Endothelial cell of umbilical vein (primary cell): ENCODE measurements at regions of chrX and their contacts with region 1.

Region 1: DNA sequence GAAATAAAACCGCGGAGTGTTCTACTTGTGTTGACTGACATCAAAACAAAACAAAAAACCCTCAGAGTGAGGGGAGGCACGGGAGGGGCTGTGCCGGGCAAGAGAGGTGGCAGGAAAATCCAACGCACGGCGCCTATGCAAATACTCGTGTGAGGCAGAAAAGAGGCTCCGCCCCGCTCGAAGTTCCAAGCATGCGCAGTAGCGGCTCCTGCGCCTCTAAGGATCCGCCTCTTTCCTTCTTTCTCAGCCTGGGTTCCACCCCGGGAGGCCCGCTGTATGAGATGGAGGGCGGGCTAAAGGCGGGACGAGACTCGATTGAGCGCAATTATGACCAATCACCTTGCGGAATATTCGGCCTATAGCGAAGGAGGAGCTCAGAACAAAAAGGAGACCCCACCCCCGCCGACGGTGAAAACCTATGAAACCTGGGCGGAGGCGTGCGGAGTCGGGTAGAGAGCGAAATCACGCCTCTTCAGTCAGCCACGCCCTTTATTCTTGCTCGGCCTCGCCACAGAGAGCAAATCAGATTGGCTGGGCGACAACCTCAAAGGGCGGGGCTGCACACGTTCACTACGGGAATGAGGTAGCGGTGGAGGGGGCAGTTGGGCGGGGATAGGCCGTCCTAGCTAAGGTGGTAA is 720 bp upstream of the CDK16 start:
- DNase-seq: peak; percentile 99
- H3K4me3 ChIP-seq: peak overlapping the region in 2 of 3 experiments; percentile 73 to 80
- H3K27ac ChIP-seq: peak overlapping the region; percentile 91
- H3K4me1 ChIP-seq: peaks cover 13% of the 10 kb centered on the region
- H3K27me3 ChIP-seq: no peaks in the 10 kb centered on the region
- CTCF ChIP-seq: no peak
- POLR2A ChIP-seq: no peak

Region 2: DNA sequence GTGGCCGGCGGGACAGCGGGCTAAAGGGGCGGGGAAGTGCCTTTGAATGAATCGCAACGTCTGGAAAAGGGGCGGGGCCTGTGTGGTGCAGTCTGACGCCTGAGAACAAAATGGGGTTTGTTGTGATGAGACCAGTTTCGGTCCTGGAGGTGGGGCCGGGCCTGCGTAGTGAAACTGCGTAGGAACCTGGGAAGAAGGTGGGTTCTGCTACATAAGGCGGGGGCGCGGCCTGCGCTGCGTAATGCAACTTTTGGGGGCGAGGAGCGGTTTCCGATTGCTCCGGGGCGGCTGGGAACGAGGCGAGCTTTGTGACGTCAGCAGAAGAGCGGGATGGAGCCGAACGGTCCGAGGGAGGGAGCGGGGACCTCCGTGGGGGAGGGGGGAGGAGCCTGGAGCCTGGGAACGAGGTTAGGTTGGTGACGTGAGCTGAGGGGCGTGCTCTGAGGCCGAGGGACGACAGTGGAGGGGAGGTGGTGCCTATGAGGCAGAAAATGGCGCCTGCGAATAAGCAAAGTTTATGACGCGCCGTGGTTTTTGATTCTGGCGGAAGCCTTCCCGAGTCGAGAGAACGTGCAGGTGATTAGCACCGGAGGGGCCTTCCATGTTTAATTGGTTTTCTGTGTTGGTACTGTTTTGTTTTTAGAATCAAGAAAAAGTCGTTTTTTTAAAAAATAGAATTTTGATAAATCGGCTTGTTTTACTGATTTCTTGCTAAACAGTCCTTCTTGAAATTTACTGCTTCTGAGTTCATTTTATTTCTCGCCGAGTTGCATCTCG is 15.8 kb after region 1 on chrX:
- CTCF ChIA-PET with region 1: no interaction called
- POLR2A ChIA-PET with region 1: interaction called, 10 read pairs
- dilution Hi-C with region 1: no loop called
- intact Hi-C with region 1: loop called (anchors 1 kb)
- DNase-seq: peak; percentile 93
- H3K4me3 ChIP-seq: peak overlapping the region; percentile 42 to 96 (median 74)
- H3K27ac ChIP-seq: peak overlapping the region; percentile 95
- H3K4me1 ChIP-seq: peaks cover 3% of the 10 kb centered on the region
- H3K27me3 ChIP-seq: no peaks in the 10 kb centered on the region
- CTCF ChIP-seq: no peak
- POLR2A ChIP-seq: peak; percentile 56

Region 3: DNA sequence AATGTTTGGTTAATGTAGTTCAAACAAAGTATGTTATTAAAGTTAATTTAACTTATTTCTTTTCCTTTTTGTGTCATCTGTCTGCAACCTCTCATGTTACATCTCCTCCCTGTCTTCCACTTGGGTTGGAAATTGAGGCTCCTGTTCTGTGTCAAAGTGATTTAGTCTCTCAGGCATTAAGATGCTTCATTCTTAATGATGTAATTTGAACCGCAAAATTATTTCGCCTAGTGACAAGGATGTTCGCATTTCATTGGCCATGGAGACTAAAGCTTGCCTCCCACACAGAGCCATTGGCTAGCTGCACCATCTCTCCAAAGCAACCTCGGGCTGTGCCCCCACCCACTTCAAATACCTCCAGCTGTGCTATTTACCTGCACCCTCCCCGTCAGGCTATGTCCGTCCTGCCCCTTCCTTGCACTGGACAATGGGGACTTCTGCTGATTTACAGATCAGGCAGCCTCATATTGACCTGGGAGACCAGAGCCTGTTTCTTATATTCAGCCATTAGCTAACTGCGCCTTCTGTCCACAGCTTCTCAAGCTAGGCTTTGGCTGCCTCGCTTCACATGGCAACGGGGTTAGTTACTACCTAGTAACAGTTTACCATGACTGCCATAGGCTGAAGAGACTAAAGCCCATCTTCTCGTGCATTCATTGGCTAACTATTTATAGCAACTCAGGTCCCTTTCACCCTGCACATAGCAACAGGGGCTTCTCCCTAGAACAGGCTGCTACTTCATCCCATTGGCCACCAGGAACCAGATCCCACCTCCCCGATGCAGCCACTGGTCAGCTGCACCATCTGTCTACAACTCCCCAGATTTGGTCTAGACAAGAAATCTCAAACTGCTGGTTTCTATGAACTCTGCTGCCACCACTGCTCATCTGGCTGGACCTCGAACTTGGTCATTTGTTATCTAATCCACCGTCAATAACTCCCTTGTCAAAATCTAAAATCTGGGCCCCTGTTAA is 144.1 kb after region 1 on chrX:
- CTCF ChIA-PET with region 1: no interaction called
- POLR2A ChIA-PET with region 1: no interaction called
- dilution Hi-C with region 1: no loop called
- intact Hi-C with region 1: loop called (anchors 5 kb)
- DNase-seq: peak; percentile 93
- H3K4me3 ChIP-seq: peak overlapping the region in 1 of 3 experiments; percentile 16
- H3K27ac ChIP-seq: no peak overlapping the region
- H3K4me1 ChIP-seq: no peaks in the 10 kb centered on the region
- H3K27me3 ChIP-seq: peaks cover 0 to 2% of the 10 kb centered on the region in 2 experiments
- CTCF ChIP-seq: no peak
- POLR2A ChIP-seq: no peak

Region 4: DNA sequence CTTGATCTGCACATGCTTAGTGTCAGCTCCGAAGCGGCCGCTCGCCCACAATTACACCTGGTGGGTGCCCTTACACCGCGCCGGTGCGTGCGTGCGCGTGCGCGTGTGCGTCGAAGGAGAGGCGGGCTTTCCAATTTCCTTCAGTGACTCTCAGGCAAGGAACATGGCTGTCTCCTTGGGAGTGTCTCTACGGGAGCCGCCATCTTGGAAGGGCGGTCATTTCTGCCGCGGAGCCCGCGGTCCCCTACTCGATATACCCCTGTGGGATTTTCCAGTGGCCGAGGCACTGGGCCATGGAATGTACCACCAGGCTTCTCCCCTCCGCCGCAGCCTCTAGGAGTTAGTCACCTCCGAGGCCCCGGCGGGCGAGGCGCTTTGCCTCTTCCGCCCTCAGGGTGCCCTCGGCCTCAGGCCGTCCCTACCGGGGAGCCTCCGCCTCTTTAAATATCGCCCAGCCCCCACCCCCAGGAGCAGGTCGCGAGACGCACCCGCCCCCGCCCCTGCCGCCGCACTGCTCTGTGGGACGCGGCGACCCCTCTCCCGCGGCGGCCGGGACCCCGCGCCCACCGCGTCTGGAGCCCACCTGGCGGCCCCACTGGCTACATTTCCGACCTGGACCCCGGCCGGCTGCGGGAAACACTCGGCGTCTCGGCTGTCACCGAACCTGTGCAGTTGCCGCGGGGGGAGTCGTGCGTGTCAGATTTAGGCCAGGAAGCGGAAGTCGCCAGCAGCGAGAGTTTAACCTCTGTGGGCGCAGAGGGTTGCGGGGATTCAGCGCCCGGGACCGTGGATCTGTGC is 264.9 kb after region 1 on chrX and contains the start of gene ZNF41:
- CTCF ChIA-PET with region 1: no interaction called
- POLR2A ChIA-PET with region 1: no interaction called
- dilution Hi-C with region 1: no loop called
- intact Hi-C with region 1: loop called (anchors 5 kb)
- DNase-seq: peak; percentile 84
- H3K4me3 ChIP-seq: peak within 1 kb of the TSS; percentile 54 to 92 (median 82)
- H3K27ac ChIP-seq: peak within 1 kb of the TSS; percentile 85
- H3K4me1 ChIP-seq: peaks cover 9% of the 10 kb centered on the region
- H3K27me3 ChIP-seq: no peaks in the 10 kb centered on the region
- CTCF ChIP-seq: no peak
- POLR2A ChIP-seq: peak; percentile 17
- total RNA-seq, gene ZNF41: 7.5 TPM in 2 replicates

Region 5: GRCh38 chrX:48636776-48637175 is 1419.0 kb after region 1 on chrX:
- CTCF ChIA-PET with region 1: no interaction called
- POLR2A ChIA-PET with region 1: no interaction called
- dilution Hi-C with region 1: no loop called
- intact Hi-C with region 1: no loop called
- DNase-seq: no peak
- H3K4me3 ChIP-seq: no peak overlapping the region
- H3K27ac ChIP-seq: no peak overlapping the region
- H3K4me1 ChIP-seq: no peaks in the 10 kb centered on the region
- H3K27me3 ChIP-seq: no peaks in the 10 kb centered on the region
- CTCF ChIP-seq: no peak
- POLR2A ChIP-seq: no peak